ENCODE measurements at regions of chr3 and their contacts with region 1.

Region 1: GRCh38 chr3:16177962-16178627 is 3.6 kb downstream of the GALNT15 start:
- DNase-seq: peak; percentile 53
- H3K4me3 ChIP-seq: no peak overlapping the region
- H3K27ac ChIP-seq: no peak overlapping the region
- H3K4me1 ChIP-seq: no peaks in the 10 kb centered on the region
- CTCF ChIP-seq: peak; percentile 92

Region 2: GRCh38 chr3:15768421-15769255 is 409.5 kb before region 1 on chr3:
- CTCF ChIA-PET with region 1: no interaction called
- POLR2A ChIA-PET with region 1: no interaction called
- intact Hi-C with region 1: no loop called
- DNase-seq: no peak
- H3K4me3 ChIP-seq: no peak overlapping the region
- H3K27ac ChIP-seq: no peak overlapping the region
- H3K4me1 ChIP-seq: no peaks in the 10 kb centered on the region
- CTCF ChIP-seq: no peak

Region 3: DNA sequence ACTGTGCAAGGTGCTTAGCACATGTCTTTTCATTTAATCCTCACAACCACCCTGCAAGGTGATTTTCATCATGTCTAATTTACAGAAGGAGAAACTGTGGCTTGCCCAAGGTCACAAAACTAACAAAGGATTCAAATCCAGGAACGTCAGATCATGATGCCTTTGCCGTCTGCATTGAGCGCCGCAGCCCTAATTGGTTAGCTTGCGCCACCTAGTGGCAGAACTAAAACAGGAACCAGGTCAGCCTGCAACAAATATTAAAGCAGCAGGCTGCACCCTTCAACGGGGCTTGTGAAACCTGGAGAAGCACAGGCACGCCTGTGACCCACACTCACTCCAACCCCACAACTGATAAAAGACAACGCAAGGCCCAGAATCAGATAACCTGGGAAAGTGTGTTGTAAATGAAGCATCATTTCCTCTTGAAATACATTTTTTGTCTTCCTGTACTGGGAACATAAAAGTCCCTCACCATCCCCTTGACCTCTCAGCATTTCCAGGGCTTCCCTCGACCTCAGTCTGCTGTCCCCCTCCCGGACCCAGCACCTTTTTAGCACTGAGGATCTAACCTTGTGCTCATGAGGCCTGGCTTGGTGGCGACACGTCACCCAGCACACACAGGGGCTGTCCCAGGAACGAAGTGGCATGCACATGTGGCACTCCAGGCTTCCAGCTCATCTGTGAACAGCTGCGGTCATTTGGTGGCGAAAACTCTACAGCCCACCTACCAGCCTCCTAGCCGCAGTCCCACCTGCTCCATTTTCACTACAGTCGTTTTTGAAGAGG is 69.4 kb after region 1 on chr3:
- CTCF ChIA-PET with region 1: no interaction called
- POLR2A ChIA-PET with region 1: no interaction called
- intact Hi-C with region 1: loop called (anchors 2 kb)
- DNase-seq: peak; percentile 88
- H3K4me3 ChIP-seq: no peak overlapping the region
- H3K27ac ChIP-seq: no peak overlapping the region
- H3K4me1 ChIP-seq: peaks cover 6% of the 10 kb centered on the region
- CTCF ChIP-seq: peak; percentile 97

Measured in OCI-LY7 (cell line).